ENCODE measurements at regions of chr2 and their contacts with region 1.

Region 1: GRCh38 chr2:174223388-174223787 is 24.9 kb downstream of the OLA1 start:
- DNase-seq: no peak
- CTCF ChIP-seq: no peak

Region 2: GRCh38 chr2:174247474-174248186 is 24.2 kb after region 1 on chr2:
- CTCF ChIA-PET with region 1: interaction called, 10 read pairs
- POLR2A ChIA-PET with region 1: interaction called, 3 read pairs
- DNase-seq: peak; percentile 35
- CTCF ChIP-seq: no peak

Region 3: DNA sequence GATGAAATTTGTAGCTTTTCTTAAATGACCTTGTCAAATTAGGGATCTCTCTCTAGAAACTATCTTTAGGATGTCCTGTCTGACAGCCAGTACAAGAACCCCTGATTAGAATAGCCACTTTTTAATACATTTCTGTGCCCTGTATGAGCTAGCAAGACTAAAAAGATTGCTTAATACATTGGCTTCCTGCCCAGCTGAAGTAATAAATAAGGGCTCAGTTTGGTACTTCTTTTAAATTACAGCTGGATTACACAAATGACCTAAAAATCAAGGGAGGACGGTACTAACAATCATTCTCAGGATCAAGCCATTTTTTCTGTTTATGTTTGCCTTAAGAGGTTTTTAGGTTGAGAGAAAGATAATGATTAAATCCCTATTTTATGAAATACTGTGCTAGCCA is 36.6 kb after region 1 on chr2:
- CTCF ChIA-PET with region 1: no interaction called
- POLR2A ChIA-PET with region 1: no interaction called
- DNase-seq: no peak
- CTCF ChIP-seq: no peak

Region 4: DNA sequence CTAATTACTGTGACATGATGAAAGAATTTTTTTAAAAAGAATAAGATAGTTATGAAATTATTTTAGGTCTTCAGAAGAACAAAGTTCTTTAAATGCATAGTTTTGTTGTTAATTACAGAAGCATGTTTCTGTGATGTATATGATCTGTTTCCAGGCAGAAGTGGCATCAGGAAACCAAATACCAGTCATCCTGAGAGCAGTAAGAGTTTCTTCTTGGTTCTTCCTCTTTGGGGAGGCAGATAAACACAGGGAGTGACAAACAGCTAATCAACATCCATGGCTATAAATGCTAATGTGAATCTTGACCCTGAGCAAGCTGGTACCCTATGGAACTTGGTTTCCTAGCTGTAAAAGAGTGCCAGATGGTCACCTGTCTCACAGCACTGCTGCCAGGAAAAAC is 345.0 kb after region 1 on chr2:
- CTCF ChIA-PET with region 1: no interaction called
- POLR2A ChIA-PET with region 1: no interaction called
- DNase-seq: no peak
- CTCF ChIP-seq: no peak

Measured in GM10248 (cell line).